Activated CD4-positive, alpha-beta T cell treated with anti-CD3 and anti-CD28 coated beads, Interleukin-2, amount 10 ng/mL, durations not matched to agents 24 days and 14 days (primary cell): ENCODE measurements at regions of chr17 and their contacts with region 1.

Region 1: GRCh38 chr17:16215273-16215964 is at the start of gene NCOR1:
- DNase-seq: peak; percentile 97
- H3K4me3 Mint-ChIP-seq: peak within 1 kb of the TSS; percentile 97
- H3K27ac Mint-ChIP-seq: peak within 1 kb of the TSS; percentile 87
- H3K4me1 Mint-ChIP-seq: peaks cover 37% of the 10 kb centered on the region
- H3K27me3 Mint-ChIP-seq: no peaks in the 10 kb centered on the region
- total RNA-seq, gene NCOR1: 119 and 133 TPM in 2 replicates

Region 2: DNA sequence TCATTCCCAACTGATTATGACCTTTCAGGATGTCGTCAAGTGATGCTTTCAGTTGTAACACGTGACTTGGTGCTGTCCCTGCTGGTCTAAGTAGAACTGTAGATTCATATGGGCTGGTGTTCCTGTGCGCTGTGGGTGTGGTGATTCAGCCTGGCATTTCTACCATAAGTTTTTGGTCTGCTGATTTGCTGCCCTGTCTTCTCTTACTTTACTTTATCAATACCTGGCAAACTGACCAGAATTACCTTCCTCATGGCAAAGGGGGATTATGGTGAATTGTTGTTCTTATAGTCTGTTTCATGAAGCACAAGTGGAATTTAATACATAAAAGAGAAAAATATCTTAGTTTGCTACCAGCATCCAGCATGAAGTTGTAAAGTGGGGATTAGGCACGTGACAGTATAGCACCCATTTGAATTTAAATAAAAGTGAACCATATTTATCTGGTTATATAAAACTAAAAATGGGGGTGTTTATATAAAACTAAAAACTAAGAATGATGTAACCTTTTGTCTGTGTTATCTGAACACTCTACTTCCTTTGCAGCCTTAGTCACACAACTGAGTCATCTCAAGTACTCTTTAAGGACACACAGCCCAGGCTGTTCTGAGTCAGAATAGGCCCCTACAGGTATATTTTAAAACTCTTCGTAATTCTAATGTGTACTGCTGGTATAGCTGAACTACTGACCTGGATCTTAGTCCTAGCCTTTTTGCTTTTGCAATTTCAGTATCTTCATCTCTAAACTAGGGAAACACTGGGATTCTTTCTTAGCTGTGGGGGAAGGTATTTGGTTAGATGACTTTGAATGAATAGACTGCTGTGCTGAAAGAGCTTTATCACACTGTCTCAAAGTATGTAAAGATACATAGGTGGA is 187.5 kb before region 1 on chr17:
- intact Hi-C with region 1: loop called (anchors 5 kb)
- DNase-seq: peak; percentile 78
- H3K4me3 Mint-ChIP-seq: peak overlapping the region; percentile 71
- H3K27ac Mint-ChIP-seq: peak overlapping the region; percentile 93
- H3K4me1 Mint-ChIP-seq: peaks cover 20% of the 10 kb centered on the region
- H3K27me3 Mint-ChIP-seq: no peaks in the 10 kb centered on the region

Region 3: DNA sequence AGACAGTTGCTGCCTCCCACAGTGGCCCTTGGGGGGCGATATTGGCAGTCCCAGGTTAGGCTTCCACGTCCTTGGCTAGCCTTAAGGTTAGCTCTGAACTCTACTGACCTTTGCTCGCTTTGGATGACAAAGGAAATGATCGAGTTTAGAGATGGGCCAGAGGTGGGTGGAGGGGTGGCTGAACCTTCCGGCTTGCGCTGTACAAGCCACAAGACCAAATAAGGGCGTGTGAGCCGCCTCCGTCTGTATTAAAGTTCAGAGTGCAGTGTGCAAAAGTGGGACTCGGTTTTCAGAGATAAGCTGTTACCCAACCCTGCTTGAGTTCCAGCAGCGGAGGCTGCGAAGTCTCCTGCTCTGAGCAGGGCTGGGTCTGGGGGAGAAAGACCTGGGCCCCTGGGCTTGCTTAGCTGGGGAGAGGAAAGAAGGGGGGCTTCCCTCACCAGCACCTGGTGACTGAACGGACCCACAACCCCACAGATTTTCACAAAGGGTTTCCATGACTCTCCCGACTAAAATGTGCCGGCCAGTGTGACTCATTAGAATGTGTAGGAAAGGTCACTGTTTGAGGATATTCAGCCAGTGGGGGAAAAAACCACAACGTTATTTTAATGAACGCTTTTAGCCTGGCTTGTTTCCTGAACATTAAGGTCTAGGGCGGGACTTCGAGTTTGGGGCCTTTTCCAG is 70.7 kb after region 1 on chr17:
- intact Hi-C with region 1: loop called (anchors 1 kb)
- DNase-seq: peak; percentile 93
- H3K4me3 Mint-ChIP-seq: peak overlapping the region; percentile 83
- H3K27ac Mint-ChIP-seq: peak overlapping the region; percentile 99
- H3K4me1 Mint-ChIP-seq: peaks cover 51% of the 10 kb centered on the region
- H3K27me3 Mint-ChIP-seq: no peaks in the 10 kb centered on the region

Region 4: GRCh38 chr17:16380640-16381495 is 165.4 kb after region 1 on chr17 and contains the start of gene UBB:
- intact Hi-C with region 1: loop called (anchors 10 kb)
- DNase-seq: peak; percentile 98
- H3K4me3 Mint-ChIP-seq: peak within 1 kb of the TSS; percentile 90
- H3K27ac Mint-ChIP-seq: peak within 1 kb of the TSS; percentile 93
- H3K4me1 Mint-ChIP-seq: peaks cover 33% of the 10 kb centered on the region
- H3K27me3 Mint-ChIP-seq: no peaks in the 10 kb centered on the region
- total RNA-seq, gene UBB: 1,973 and 2,004 TPM in 2 replicates

Region 5: DNA sequence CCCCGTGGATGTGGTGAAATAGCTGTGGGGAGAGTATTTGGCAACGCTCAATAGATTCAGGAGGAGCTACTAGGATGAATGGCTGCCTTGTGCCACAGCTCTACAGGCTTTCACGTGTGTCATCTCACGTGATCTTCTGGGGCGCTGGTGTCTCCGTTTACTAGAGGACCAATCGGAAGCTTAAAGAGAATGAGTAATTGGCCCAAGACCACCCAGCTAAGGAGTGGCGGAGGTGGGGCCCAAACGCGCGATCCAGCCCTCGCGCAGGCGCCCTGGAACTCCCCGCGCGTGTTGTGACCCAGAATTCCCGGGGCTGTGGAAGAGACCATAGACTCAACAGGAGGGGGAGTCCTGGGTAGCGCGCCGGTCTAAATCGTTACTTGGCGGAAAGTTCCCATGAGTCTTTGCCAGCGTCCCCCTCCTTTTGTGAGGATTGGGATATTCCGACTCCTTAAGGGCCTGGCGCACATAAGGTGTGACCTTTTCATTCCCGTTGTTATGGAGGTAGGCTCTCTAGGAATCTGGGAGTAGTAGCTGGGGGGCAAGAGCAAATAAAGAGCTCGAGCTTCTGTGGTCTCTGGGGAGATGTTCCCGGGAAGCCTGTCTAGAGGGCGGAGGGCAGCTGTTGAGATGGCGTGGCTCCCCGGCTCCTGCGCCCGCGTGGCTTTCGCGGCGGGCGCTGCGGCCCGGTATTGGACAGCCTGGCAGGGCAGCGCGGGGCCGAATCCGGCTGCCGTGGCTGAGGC is 223.3 kb after region 1 on chr17:
- intact Hi-C with region 1: loop called (anchors 5 kb)
- DNase-seq: peak; percentile 98
- H3K4me3 Mint-ChIP-seq: peak overlapping the region; percentile 99
- H3K27ac Mint-ChIP-seq: peak overlapping the region; percentile 99
- H3K4me1 Mint-ChIP-seq: peaks cover 45% of the 10 kb centered on the region
- H3K27me3 Mint-ChIP-seq: no peaks in the 10 kb centered on the region

Region 6: GRCh38 chr17:16589097-16589969 is 373.9 kb after region 1 on chr17:
- intact Hi-C with region 1: loop called (anchors 10 kb)
- DNase-seq: peak; percentile 98
- H3K4me3 Mint-ChIP-seq: peak overlapping the region; percentile 72
- H3K27ac Mint-ChIP-seq: no peak overlapping the region
- H3K4me1 Mint-ChIP-seq: peaks cover 6% of the 10 kb centered on the region
- H3K27me3 Mint-ChIP-seq: peaks cover 41% of the 10 kb centered on the region